K562 (cell line): ENCODE measurements at regions of chr11 and their contacts with region 1.

Region 1: DNA sequence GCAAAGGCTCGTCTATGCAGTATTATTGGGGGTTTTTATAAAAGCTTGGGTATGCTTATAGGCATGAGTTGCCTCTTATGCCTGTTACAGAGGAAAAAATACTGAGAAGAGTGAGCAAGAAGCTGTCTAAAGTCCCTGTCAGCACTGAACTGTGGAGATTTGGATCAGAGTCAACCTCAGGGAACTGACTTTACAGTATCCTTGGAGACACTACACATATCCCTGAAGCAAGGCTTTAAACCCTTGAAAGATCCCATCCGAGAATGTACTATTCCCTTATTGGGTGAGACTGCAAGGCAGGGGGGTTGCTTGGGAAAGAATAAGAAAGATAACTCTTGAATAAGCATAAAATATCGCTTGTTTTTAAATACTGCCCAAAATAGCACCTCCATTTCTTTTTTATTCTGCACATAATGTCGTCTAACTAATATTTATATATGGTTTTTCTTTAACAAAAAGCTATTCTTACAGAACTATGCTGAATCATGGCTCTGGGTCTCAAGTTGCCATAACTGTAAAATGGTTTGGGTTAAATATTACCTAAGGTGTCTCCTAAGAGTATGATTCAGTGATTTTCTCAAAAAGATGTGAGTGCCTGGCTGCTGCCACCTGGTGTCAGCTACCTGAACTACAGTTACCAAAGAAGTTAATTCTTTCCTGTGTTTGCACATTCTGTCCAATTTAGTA is 1062.8 kb downstream of the DLG2 start:
- DNase-seq: peak; percentile 20 to 50 (median 26)
- ATAC-seq: 0 out of 3 replicates have a peak, but pooled peaks have one; percentile 38
- H3K4me3 ChIP-seq: no peak overlapping the region
- H3K27ac ChIP-seq: no peak overlapping the region
- H3K4me1 ChIP-seq: no peaks in the 10 kb centered on the region
- H3K27me3 ChIP-seq: no peaks in the 10 kb centered on the region
- CTCF ChIP-seq: peak; percentile 37 to 63 (median 57)
- EP300 ChIP-seq: no peak
- POLR2A ChIP-seq: no peak
- RAD21 ChIP-seq: peak; percentile 45 to 62; a peak in 3 of 4 replicates

Region 2: GRCh38 chr11:83827940-83828554 is 736.3 kb before region 1 on chr11:
- CTCF ChIA-PET with region 1: no interaction called
- POLR2A ChIA-PET with region 1: no interaction called
- in situ Hi-C with region 1: loop called (anchors 25 kb)
- intact Hi-C with region 1: loop called (anchors 1 kb)
- DNase-seq: peak; percentile 19 to 46 (median 25)
- ATAC-seq: peak; percentile 90
- H3K4me3 ChIP-seq: no peak overlapping the region
- H3K27ac ChIP-seq: no peak overlapping the region
- H3K4me1 ChIP-seq: no peaks in the 10 kb centered on the region
- H3K27me3 ChIP-seq: no peaks in the 10 kb centered on the region
- CTCF ChIP-seq: peak; percentile 24 to 64 (median 48); a peak in 5 of 6 replicates
- EP300 ChIP-seq: no peak
- POLR2A ChIP-seq: no peak
- RAD21 ChIP-seq: peak; percentile 28 to 61; a peak in 3 of 4 replicates

Region 3: GRCh38 chr11:84384731-84385130 is 179.6 kb before region 1 on chr11:
- CTCF ChIA-PET with region 1: no interaction called
- POLR2A ChIA-PET with region 1: no interaction called
- in situ Hi-C with region 1: no loop called
- intact Hi-C with region 1: loop called (anchors 10 kb)
- DNase-seq: peak; percentile 9 to 44 (median 22)
- ATAC-seq: no peak
- H3K4me3 ChIP-seq: no peak overlapping the region
- H3K27ac ChIP-seq: no peak overlapping the region
- H3K4me1 ChIP-seq: no peaks in the 10 kb centered on the region
- H3K27me3 ChIP-seq: no peaks in the 10 kb centered on the region
- CTCF ChIP-seq: peak; percentile 26 to 55 (median 55); a peak in 5 of 6 replicates
- EP300 ChIP-seq: no peak
- POLR2A ChIP-seq: no peak
- RAD21 ChIP-seq: peak in 1 of 2 experiments; percentile 43; a peak in 3 of 4 replicates